IMR-90 (cell line): ENCODE measurements at regions of chr4 and their contacts with region 1.

Region 1: GRCh38 chr4:80072744-80073472 is at the start of gene ANTXR2:
- DNase-seq: peak; percentile 98
- ATAC-seq: peak; percentile 90
- H3K4me3 ChIP-seq: peak within 1 kb of the TSS; percentile 85
- H3K27ac ChIP-seq: peak within 1 kb of the TSS; percentile 93
- H3K4me1 ChIP-seq: peaks cover 1% of the 10 kb centered on the region; the same call in 1 of the 2 replicates
- H3K27me3 ChIP-seq: no peaks in the 10 kb centered on the region
- CTCF ChIP-seq: 0 out of 2 replicates have a peak, but pooled peaks have one; percentile 12
- POLR2A ChIP-seq: peak; percentile 75
- RAD21 ChIP-seq: no peak
- total RNA-seq, gene ANTXR2: 88.5 and 115 TPM in 2 replicates

Region 2: GRCh38 chr4:79042079-79042674 is 1030.7 kb before region 1 on chr4:
- CTCF ChIA-PET with region 1: no interaction called
- POLR2A ChIA-PET with region 1: no interaction called
- dilution Hi-C with region 1: no loop called
- in situ Hi-C with region 1: no loop called
- intact Hi-C with region 1: loop called (anchors 2 kb)
- DNase-seq: peak; percentile 22
- ATAC-seq: no peak; the same call in 1 of the 2 replicates
- H3K4me3 ChIP-seq: no peak overlapping the region
- H3K27ac ChIP-seq: no peak overlapping the region
- H3K4me1 ChIP-seq: no peaks in the 10 kb centered on the region
- H3K27me3 ChIP-seq: no peaks in the 10 kb centered on the region
- CTCF ChIP-seq: peak; percentile 48
- POLR2A ChIP-seq: no peak
- RAD21 ChIP-seq: peak; percentile 54

Region 3: GRCh38 chr4:79650794-79651431 is 422.0 kb before region 1 on chr4:
- CTCF ChIA-PET with region 1: interaction called, 3 read pairs
- POLR2A ChIA-PET with region 1: no interaction called
- dilution Hi-C with region 1: no loop called
- in situ Hi-C with region 1: no loop called
- intact Hi-C with region 1: loop called (anchors 2 kb)
- DNase-seq: peak; percentile 77
- ATAC-seq: peak; percentile 74
- H3K4me3 ChIP-seq: no peak overlapping the region
- H3K27ac ChIP-seq: peak overlapping the region; percentile 97; the same call in 1 of the 2 replicates
- H3K4me1 ChIP-seq: peaks cover 2% of the 10 kb centered on the region
- H3K27me3 ChIP-seq: no peaks in the 10 kb centered on the region
- CTCF ChIP-seq: no peak
- POLR2A ChIP-seq: no peak
- RAD21 ChIP-seq: no peak

Region 4: DNA sequence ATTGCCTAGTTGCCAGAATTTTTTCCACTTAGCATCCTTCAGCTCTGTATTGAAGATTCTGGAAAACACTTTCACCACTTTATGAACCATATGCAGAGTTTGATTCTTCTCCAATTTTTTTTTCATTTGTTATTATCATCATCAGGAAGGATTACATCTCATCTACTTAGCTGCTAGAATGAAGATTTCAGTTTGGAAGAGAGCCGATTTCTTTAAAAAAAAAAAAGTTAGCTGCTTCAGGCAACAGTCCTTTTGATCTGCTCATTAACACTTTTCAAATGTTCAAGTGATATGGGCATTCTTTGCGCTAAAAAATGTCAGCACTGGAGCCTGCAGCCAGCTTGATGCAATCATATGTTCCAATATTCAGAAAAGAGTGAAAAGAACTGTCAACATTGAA is 76.1 kb before region 1 on chr4:
- CTCF ChIA-PET with region 1: no interaction called
- POLR2A ChIA-PET with region 1: no interaction called
- dilution Hi-C with region 1: no loop called
- in situ Hi-C with region 1: no loop called
- intact Hi-C with region 1: no loop called
- DNase-seq: no peak
- ATAC-seq: no peak
- H3K4me3 ChIP-seq: no peak overlapping the region
- H3K27ac ChIP-seq: no peak overlapping the region; the same call in 1 of the 2 replicates
- H3K4me1 ChIP-seq: no peaks in the 10 kb centered on the region; the same call in 1 of the 2 replicates
- H3K27me3 ChIP-seq: no peaks in the 10 kb centered on the region
- CTCF ChIP-seq: no peak
- POLR2A ChIP-seq: no peak
- RAD21 ChIP-seq: no peak

Region 5: DNA sequence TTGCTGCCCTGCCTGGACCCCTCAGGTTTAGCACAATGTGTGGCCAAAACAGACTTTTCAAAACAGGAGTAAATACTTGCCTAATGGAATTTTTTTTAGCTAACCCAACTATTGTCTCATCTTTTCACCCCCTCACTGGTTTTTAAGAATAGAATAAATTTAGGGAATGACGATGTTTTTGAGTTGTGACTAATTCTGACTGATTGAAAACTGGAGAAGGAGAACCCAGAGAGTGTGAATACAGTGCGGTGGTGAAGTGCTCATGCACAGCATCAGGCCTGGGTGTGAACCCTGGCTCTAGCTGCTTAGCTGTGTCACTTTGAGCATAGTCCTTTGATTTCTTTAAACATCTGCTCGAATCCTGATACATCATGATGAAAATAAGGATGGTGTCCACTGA is 10.4 kb before region 1 on chr4:
- CTCF ChIA-PET with region 1: no interaction called
- POLR2A ChIA-PET with region 1: no interaction called
- dilution Hi-C with region 1: no loop called
- in situ Hi-C with region 1: no loop called
- intact Hi-C with region 1: loop called (anchors 1 kb)
- DNase-seq: no peak
- ATAC-seq: no peak
- H3K4me3 ChIP-seq: no peak overlapping the region
- H3K27ac ChIP-seq: no peak overlapping the region
- H3K4me1 ChIP-seq: no peaks in the 10 kb centered on the region
- H3K27me3 ChIP-seq: no peaks in the 10 kb centered on the region
- CTCF ChIP-seq: no peak
- POLR2A ChIP-seq: no peak
- RAD21 ChIP-seq: no peak

Region 6: GRCh38 chr4:80202190-80202711 is 129.3 kb after region 1 on chr4:
- CTCF ChIA-PET with region 1: interaction called, 3 read pairs
- POLR2A ChIA-PET with region 1: no interaction called
- dilution Hi-C with region 1: no loop called
- in situ Hi-C with region 1: no loop called
- intact Hi-C with region 1: loop called (anchors 1 kb)
- DNase-seq: peak; percentile 80
- ATAC-seq: peak; percentile 75
- H3K4me3 ChIP-seq: peak overlapping the region; percentile 66
- H3K27ac ChIP-seq: peak overlapping the region; percentile 89
- H3K4me1 ChIP-seq: peaks cover 2% of the 10 kb centered on the region; the same call in 1 of the 2 replicates
- H3K27me3 ChIP-seq: no peaks in the 10 kb centered on the region
- CTCF ChIP-seq: peak; percentile 76
- POLR2A ChIP-seq: no peak
- RAD21 ChIP-seq: peak; percentile 56